ENCODE measurements at regions of chr11 and their contacts with region 1.

Region 1: GRCh38 chr11:128342511-128343134 is 244.7 kb downstream of the ETS1 start:
- DNase-seq: peak; percentile 91
- ATAC-seq: peak; percentile 68
- H3K4me3 Mint-ChIP-seq: peak overlapping the region; percentile 65
- H3K27ac Mint-ChIP-seq: peak overlapping the region; percentile 95
- H3K4me1 Mint-ChIP-seq: peaks cover 97% of the 10 kb centered on the region
- H3K27me3 Mint-ChIP-seq: no peaks in the 10 kb centered on the region

Region 2: DNA sequence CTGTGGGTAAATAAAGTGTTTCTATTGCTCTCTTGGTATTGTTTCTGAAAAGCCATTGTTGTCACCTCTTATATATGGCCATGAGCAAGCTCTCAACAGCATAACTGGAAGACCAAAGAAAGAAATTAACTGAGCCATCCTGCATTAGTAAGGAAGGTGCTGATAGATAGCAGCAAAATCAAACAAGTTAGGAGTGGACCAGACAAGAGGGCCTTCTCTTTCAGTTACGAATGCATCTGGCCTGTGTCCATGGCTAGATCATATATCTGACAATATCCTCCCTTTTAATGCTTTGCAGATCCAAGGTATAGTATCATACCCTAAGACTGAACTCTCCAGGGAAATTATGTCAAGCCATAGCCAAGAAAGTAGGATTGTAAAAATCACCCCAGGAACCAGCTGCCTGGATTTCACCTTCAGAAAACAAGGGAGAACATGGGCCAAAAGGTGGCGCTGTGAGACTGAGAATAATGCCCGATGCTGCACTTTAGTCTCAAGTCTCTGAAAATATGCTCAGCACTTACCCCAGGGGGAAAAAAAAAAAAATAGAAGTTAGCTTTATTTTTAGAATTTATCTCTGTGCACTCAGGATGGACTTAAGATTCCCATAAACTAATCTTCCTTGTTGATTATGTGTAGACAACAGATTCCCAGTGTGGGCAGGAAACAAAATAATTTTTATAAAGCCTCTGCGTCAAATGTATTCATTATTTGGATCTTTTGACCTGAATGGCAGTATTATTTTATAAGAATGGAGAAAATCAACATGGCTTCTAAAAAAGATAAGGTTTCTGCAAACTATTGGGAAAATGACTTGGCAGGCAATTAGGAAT is 170.4 kb before region 1 on chr11:
- CTCF ChIA-PET with region 1: no interaction called
- POLR2A ChIA-PET with region 1: interaction called, 4 read pairs
- intact Hi-C with region 1: loop called in 1 of 2 experiments (anchors 5 kb)
- DNase-seq: peak; percentile 94
- ATAC-seq: peak; percentile 84
- H3K4me3 Mint-ChIP-seq: no peak overlapping the region
- H3K27ac Mint-ChIP-seq: no peak overlapping the region
- H3K4me1 Mint-ChIP-seq: peaks cover 22% of the 10 kb centered on the region
- H3K27me3 Mint-ChIP-seq: peaks cover 5% of the 10 kb centered on the region

Region 3: GRCh38 chr11:128226106-128226716 is 116.4 kb before region 1 on chr11:
- CTCF ChIA-PET with region 1: interaction called, 3 read pairs
- POLR2A ChIA-PET with region 1: interaction called, 4 read pairs
- intact Hi-C with region 1: loop called (anchors 1 kb)
- DNase-seq: peak; percentile 62
- ATAC-seq: peak; percentile 54
- H3K4me3 Mint-ChIP-seq: no peak overlapping the region
- H3K27ac Mint-ChIP-seq: peak overlapping the region; percentile 55
- H3K4me1 Mint-ChIP-seq: peaks cover 52% of the 10 kb centered on the region
- H3K27me3 Mint-ChIP-seq: no peaks in the 10 kb centered on the region

Region 4: GRCh38 chr11:128302425-128303186 is 40.0 kb before region 1 on chr11:
- CTCF ChIA-PET with region 1: interaction called, 5 read pairs
- POLR2A ChIA-PET with region 1: interaction called, 6 read pairs
- intact Hi-C with region 1: loop called in 1 of 2 experiments (anchors 1 kb)
- DNase-seq: peak; percentile 76
- ATAC-seq: peak; percentile 88
- H3K4me3 Mint-ChIP-seq: peak overlapping the region; percentile 80
- H3K27ac Mint-ChIP-seq: peak overlapping the region; percentile 95
- H3K4me1 Mint-ChIP-seq: peaks cover 84% of the 10 kb centered on the region
- H3K27me3 Mint-ChIP-seq: no peaks in the 10 kb centered on the region

Region 5: GRCh38 chr11:128328955-128329551 is 13.6 kb before region 1 on chr11:
- CTCF ChIA-PET with region 1: interaction called, 28 read pairs
- POLR2A ChIA-PET with region 1: interaction called, 39 read pairs
- intact Hi-C with region 1: loop called (anchors 1 kb)
- DNase-seq: peak; percentile 67
- ATAC-seq: peak; percentile 24
- H3K4me3 Mint-ChIP-seq: peak overlapping the region; percentile 51
- H3K27ac Mint-ChIP-seq: peak overlapping the region; percentile 92
- H3K4me1 Mint-ChIP-seq: peaks cover 81% of the 10 kb centered on the region
- H3K27me3 Mint-ChIP-seq: no peaks in the 10 kb centered on the region

Region 6: GRCh38 chr11:128389461-128389976 is 46.9 kb after region 1 on chr11:
- CTCF ChIA-PET with region 1: no interaction called
- POLR2A ChIA-PET with region 1: no interaction called
- intact Hi-C with region 1: no loop called
- DNase-seq: no peak
- ATAC-seq: no peak
- H3K4me3 Mint-ChIP-seq: no peak overlapping the region
- H3K27ac Mint-ChIP-seq: no peak overlapping the region
- H3K4me1 Mint-ChIP-seq: peaks cover 30% of the 10 kb centered on the region
- H3K27me3 Mint-ChIP-seq: no peaks in the 10 kb centered on the region

Region 7: GRCh38 chr11:128497061-128497775 is 154.6 kb after region 1 on chr11:
- CTCF ChIA-PET with region 1: interaction called, 4 read pairs
- POLR2A ChIA-PET with region 1: interaction called, 7 read pairs
- intact Hi-C with region 1: loop called in 1 of 2 experiments (anchors 2 kb)
- DNase-seq: peak; percentile 52
- ATAC-seq: peak; percentile 8
- H3K4me3 Mint-ChIP-seq: peak overlapping the region; percentile 70
- H3K27ac Mint-ChIP-seq: peak overlapping the region; percentile 99
- H3K4me1 Mint-ChIP-seq: peaks cover 95% of the 10 kb centered on the region
- H3K27me3 Mint-ChIP-seq: no peaks in the 10 kb centered on the region

Region 8: GRCh38 chr11:128553662-128554362 is 211.2 kb after region 1 on chr11:
- CTCF ChIA-PET with region 1: no interaction called
- POLR2A ChIA-PET with region 1: no interaction called
- intact Hi-C with region 1: loop called in 1 of 2 experiments (anchors 1 kb)
- DNase-seq: no peak
- ATAC-seq: no peak
- H3K4me3 Mint-ChIP-seq: no peak overlapping the region
- H3K27ac Mint-ChIP-seq: peak overlapping the region; percentile 94
- H3K4me1 Mint-ChIP-seq: peaks cover 56% of the 10 kb centered on the region
- H3K27me3 Mint-ChIP-seq: no peaks in the 10 kb centered on the region

Measured in activated CD4-positive, alpha-beta T cell treated with anti-CD3 and anti-CD28 coated beads for 36 hours (primary cell).